ENCODE measurements at regions of chrX and their contacts with region 1.

Region 1: GRCh38 chrX:41209853-41210252 is 124.1 kb upstream of the DDX3X start:
- DNase-seq: no peak
- ATAC-seq: no peak
- H3K4me3 ChIP-seq: no peak overlapping the region
- H3K27ac ChIP-seq: no peak overlapping the region
- H3K4me1 ChIP-seq: no peaks in the 10 kb centered on the region
- H3K27me3 ChIP-seq: no peaks in the 10 kb centered on the region
- CTCF ChIP-seq: no peak
- POLR2A ChIP-seq: no peak

Region 2: GRCh38 chrX:40552768-40553167 is 657.1 kb before region 1 on chrX:
- intact Hi-C with region 1: no loop called
- DNase-seq: no peak
- ATAC-seq: no peak
- H3K4me3 ChIP-seq: no peak overlapping the region
- H3K27ac ChIP-seq: no peak overlapping the region
- H3K4me1 ChIP-seq: no peaks in the 10 kb centered on the region
- H3K27me3 ChIP-seq: no peaks in the 10 kb centered on the region
- CTCF ChIP-seq: no peak
- POLR2A ChIP-seq: no peak

Region 3: DNA sequence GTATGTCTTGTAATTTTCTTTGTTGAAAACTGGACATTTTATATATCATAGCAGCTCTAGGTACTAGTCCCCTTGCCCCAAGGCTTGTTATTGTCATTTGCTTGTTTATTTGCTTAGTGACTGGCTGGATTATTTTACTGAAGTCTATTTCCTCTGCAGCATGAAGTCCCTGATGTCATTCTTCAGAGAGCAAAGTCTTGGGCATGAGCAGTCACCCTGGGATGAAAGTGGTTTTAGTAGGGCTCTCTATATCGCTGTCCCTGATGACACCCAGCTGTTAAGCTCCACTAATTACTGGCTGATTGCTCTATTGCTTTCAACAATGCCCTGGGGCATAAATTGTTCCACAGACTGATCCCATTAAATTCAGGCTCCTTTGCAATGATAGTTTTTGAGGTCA is 238.1 kb before region 1 on chrX:
- intact Hi-C with region 1: no loop called
- DNase-seq: no peak
- ATAC-seq: no peak
- H3K4me3 ChIP-seq: no peak overlapping the region
- H3K27ac ChIP-seq: no peak overlapping the region
- H3K4me1 ChIP-seq: no peaks in the 10 kb centered on the region
- H3K27me3 ChIP-seq: no peaks in the 10 kb centered on the region
- CTCF ChIP-seq: no peak
- POLR2A ChIP-seq: no peak

Region 4: DNA sequence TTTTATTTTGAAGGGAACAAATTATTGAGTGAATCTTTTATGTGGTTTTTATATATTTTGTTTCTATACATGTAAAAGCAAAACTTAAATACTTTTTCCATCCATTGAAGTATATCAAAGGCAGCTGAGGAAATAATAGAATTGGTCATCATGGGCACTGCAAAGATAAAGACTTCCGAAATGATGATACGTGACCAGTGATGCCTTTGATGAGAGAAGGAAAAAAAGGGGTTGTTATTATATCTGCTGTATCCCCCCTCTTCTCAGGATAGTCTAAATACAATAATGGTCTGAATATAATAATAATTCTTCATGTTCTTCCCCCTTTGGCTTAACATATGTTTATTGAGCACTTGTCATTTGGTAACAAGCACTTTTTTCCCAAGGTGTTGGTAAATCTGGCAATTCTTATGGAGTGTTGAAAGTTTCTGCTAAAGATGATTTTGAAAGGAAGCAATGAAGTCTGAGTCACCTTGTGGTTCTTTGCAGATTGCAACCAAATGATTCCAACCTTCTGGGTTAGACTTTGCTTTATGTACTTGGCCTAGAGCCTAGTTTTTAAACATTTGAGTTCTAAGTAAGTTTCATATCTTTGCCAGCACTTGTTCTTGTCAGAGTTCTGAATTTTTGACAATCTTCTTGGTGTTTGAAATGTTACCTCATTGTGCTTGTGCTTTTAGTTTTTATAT is 63.8 kb before region 1 on chrX:
- intact Hi-C with region 1: loop called (anchors 10 kb)
- DNase-seq: no peak
- ATAC-seq: no peak
- H3K4me3 ChIP-seq: no peak overlapping the region
- H3K27ac ChIP-seq: no peak overlapping the region
- H3K4me1 ChIP-seq: no peaks in the 10 kb centered on the region
- H3K27me3 ChIP-seq: no peaks in the 10 kb centered on the region
- CTCF ChIP-seq: peak in 2 of 7 experiments; percentile 26 to 33
- POLR2A ChIP-seq: no peak

Region 5: DNA sequence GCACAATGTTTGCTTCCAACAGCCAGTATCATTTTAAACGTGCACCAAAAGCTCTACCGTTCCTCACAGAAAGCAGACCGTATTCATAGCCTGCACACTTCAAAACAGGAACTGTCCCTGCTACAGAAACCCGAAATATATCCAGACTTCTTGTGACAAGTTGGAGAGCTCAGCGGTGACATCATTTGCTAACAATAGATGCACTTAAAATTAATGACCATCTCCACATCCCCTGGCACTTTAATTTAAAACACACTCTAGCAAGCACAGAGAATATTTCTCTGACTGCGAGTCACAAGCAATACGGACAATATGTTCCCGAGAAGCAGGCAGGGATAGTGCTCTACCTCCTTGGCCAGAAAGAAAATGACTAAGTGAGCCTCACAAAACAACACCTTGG is 239.8 kb after region 1 on chrX:
- intact Hi-C with region 1: no loop called
- DNase-seq: peak in 1 of 4 donors; percentile 28
- ATAC-seq: no peak
- H3K4me3 ChIP-seq: no peak overlapping the region
- H3K27ac ChIP-seq: no peak overlapping the region
- H3K4me1 ChIP-seq: no peaks in the 10 kb centered on the region
- H3K27me3 ChIP-seq: no peaks in the 10 kb centered on the region
- CTCF ChIP-seq: no peak
- POLR2A ChIP-seq: no peak